ENCODE measurements at regions of chr12 and their contacts with region 1.

Region 1: GRCh38 chr12:110501752-110502738 is at the starts of genes RAD9B and VPS29:
- ATAC-seq: peak; percentile 92 to 99 (median 98)
- H3K4me3 ChIP-seq: peak within 1 kb of the TSS; percentile 56 to 95 (median 78)
- H3K27ac ChIP-seq: peak within 1 kb of the TSS; percentile 72 to 87
- H3K4me1 ChIP-seq: peaks cover 17 to 19% of the 10 kb centered on the region in 2 donors
- total RNA-seq, gene RAD9B: 0.18 to 1.0 (median 0.45) TPM
- total RNA-seq, gene VPS29: 54.2 to 110 (median 83.7) TPM

Region 2: GRCh38 chr12:109934026-109934425 is 568.0 kb before region 1 on chr12:
- in situ Hi-C with region 1: no loop called
- ATAC-seq: no peak
- H3K4me3 ChIP-seq: no peak overlapping the region
- H3K27ac ChIP-seq: no peak overlapping the region
- H3K4me1 ChIP-seq: no peaks in the 10 kb centered on the region

Region 3: DNA sequence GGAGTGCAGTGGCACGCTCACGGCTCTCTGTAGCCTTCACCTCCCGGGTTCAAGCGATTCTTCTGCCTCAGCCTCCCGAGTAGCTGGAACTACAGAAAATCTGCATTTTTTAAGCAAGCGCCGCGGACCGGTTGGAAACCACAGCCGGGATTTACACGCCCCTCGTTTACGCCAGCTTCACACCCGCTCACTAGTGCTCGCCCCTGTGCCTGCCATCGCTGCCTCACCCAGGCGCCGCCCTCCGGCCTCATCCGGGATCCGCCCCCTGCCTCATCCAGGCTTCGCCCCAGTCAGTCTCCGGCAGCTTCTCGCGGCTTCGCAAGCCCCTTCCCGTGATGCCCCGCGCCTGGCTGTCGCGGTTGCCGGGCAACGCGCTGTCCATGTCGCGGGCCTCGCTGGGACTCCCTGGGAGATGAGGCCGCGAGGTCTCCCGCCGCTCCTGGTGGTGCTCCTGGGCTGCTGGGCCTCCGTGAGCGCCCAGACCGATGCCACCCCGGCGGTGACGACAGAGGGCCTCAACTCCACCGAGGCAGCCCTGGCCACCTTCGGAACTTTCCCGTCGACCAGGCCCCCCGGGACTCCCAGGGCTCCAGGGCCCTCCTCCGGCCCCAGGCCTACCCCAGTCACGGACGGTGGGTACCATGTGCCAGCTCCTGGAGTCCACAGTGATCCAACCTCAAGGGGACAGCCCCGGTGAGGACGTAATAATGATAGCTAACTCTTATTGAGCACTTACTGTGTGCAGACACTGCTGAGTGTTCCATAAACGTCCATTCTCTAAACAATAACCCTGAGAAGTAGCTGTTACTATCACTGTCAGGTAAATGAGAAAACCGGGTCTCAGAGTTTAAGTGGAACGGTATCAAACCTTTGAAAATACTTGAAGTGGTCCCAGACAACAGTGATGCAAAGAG is 112.0 kb after region 1 on chr12 and contains the start of gene TCTN1:
- in situ Hi-C with region 1: loop called in 1 of 9 experiments (anchors 25 kb)
- ATAC-seq: peak; percentile 94 to 99 (median 98)
- H3K4me3 ChIP-seq: peak within 1 kb of the TSS; percentile 54 to 60 (median 55)
- H3K27ac ChIP-seq: peak within 1 kb of the TSS; percentile 66 to 74
- H3K4me1 ChIP-seq: peaks cover 6 to 8% of the 10 kb centered on the region in 2 donors
- total RNA-seq, gene TCTN1: 37.7 to 116 (median 51.4) TPM

Region 4: DNA sequence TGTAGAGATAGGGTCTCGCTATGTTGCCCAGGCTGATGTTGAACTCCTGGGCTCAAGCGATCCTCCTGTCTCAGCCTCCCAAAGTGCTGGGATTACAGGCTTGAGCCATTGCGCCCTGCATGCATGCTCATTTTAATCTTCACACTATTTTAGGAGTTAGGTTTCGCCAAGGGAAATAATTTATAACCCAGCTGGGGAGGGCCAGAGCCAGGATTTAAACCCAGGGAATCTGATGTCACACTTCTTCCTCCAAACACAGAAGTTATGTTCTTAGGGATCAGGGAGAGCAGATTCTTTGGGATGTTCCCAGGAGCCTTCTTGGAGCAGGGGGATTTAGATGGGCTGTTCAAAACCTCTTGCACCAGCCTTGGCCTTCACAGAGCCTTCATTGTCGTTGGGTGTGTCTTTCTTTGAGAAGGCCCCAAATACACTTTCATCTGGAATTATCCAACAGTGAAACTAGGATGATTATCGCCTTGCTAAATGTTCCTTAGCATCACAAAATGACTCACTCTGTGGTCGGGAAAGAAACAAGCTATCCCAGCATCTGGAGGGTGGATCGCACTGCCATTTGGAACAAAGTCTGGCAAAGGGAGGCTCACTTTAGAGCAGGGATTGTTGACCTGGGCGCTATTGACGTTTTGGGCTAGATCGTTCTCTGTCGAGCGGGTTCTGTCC is 248.9 kb after region 1 on chr12:
- in situ Hi-C with region 1: no loop called
- ATAC-seq: peak in 2 of 8 experiments; percentile 98
- H3K4me3 ChIP-seq: no peak overlapping the region
- H3K27ac ChIP-seq: no peak overlapping the region
- H3K4me1 ChIP-seq: no peaks in the 10 kb centered on the region

Region 5: GRCh38 chr12:110888256-110888991 is 386.4 kb after region 1 on chr12:
- in situ Hi-C with region 1: loop called in 1 of 9 experiments (anchors 25 kb)
- ATAC-seq: no peak
- H3K4me3 ChIP-seq: peak overlapping the region in 1 of 5 donors; percentile 4
- H3K27ac ChIP-seq: no peak overlapping the region
- H3K4me1 ChIP-seq: peaks cover 16 to 20% of the 10 kb centered on the region in 2 donors